ENCODE measurements at regions of chr15 and their contacts with region 1.

Region 1: DNA sequence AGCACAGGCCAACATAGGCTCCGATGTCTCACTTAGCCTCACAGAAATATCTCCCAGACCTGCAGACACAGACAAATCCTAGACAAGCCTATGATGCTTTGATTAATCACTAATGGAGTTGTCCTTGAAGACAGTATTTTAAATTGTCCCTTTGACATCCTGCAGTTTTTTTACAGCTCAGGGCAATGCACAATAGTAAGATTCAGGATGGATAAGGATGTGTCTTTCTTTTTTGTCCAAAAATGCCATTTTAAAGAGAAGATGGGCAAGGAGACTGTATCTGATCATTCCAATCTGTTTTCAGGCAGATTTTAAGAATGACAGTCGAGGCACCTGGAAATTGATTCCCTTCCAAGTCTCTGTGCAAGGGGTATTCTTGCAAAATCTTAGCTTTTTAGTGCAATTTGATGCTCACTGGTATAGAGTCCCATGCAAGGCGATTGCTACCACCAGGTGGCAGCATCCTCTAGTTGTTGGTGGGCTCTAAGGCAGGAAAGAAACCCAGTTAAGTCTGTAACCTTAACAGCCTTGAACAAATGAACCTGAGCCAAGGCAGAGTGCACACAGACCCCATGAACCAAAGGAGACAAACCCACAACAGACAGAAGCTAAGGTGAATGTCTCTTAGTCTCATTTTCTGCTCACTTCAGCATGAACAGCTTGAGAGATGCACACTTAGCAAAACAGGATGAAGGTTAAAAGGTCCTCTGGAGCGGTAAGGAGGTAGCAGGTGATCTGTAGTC is 51.2 kb upstream of the MINAR1 start:
- DNase-seq: peak; percentile 50
- H3K4me3 Mint-ChIP-seq: no peak overlapping the region
- H3K27ac Mint-ChIP-seq: no peak overlapping the region
- H3K4me1 Mint-ChIP-seq: no peaks in the 10 kb centered on the region
- H3K27me3 Mint-ChIP-seq: no peaks in the 10 kb centered on the region

Region 2: DNA sequence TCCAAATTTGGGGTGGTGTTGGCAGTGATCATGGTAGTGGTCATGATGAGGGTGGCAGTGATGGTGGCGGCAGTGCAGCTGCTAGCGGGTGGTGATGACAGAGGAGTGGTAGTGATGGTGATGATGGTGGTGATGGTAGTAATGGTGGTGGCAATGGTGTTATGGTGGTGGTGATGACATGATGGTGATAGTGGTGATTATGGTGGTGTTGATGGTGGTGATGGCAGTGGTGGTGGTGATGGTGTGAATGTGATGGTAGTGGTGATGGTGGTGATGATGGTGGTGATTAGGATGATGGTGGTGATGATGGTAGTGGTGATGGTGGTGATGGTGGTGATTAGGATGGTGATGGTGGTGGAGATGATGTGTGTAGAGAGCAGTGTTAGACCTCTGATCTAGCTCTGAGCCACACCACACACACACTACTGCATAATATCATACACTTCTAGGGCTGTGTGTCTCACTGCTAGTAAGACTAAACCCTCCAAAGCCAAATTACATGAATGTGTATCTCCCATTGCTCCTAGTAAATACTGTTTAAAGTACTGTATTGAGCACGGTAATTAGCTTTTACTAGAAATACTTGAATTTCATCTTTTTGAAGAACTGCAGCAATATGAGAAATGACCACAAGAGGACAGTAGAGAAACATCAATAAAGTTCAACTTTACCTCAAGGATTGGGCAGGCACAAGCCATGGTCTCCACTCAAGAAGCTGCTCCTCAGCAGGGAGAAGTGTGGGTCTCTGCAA is 41.2 kb before region 1 on chr15:
- intact Hi-C with region 1: no loop called
- DNase-seq: no peak
- H3K4me3 Mint-ChIP-seq: no peak overlapping the region
- H3K27ac Mint-ChIP-seq: no peak overlapping the region
- H3K4me1 Mint-ChIP-seq: no peaks in the 10 kb centered on the region
- H3K27me3 Mint-ChIP-seq: no peaks in the 10 kb centered on the region

Region 3: GRCh38 chr15:79596051-79596507 is 215.2 kb after region 1 on chr15:
- intact Hi-C with region 1: loop called (anchors 1 kb)
- DNase-seq: peak; percentile 51
- H3K4me3 Mint-ChIP-seq: no peak overlapping the region
- H3K27ac Mint-ChIP-seq: no peak overlapping the region
- H3K4me1 Mint-ChIP-seq: no peaks in the 10 kb centered on the region
- H3K27me3 Mint-ChIP-seq: peaks cover 9% of the 10 kb centered on the region

Region 4: DNA sequence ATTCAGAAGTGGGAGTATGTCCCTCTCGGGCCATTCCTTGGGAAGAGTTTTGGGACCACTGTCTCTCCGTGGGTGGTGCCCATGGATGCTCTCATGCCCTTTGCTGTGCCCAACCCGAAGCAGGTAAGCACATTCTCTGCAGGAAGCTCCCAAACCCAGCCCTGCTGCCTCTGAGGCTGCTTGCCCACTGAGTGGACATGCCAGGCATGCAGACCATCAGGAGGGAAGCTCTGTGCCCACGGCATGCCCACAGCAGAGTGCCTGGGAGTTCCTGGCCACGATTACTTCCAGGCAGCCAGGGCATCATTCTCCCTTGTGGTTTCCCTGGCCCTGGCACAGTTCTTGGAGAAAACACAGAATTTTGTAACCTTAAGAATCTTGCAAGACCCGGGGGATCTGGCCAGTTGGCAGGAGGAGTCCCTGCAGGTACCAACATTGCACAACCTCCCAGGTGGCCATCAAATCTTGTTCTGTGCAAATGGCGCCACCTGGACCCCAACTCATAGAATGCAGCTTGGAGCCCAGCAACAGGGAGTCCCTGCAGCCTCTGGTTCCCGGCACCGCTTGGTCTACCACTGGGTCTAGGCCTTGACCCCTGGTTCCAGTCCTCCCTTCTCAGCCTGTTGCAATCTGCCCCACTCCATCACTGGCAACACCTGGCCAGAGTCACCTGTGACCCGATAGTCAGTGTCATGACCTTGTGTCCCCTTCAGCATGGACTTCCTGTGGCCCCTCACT is 792.3 kb after region 1 on chr15:
- intact Hi-C with region 1: loop called (anchors 1 kb)
- DNase-seq: peak; percentile 57
- H3K4me3 Mint-ChIP-seq: no peak overlapping the region
- H3K27ac Mint-ChIP-seq: no peak overlapping the region
- H3K4me1 Mint-ChIP-seq: peaks cover 5% of the 10 kb centered on the region
- H3K27me3 Mint-ChIP-seq: no peaks in the 10 kb centered on the region

Region 5: DNA sequence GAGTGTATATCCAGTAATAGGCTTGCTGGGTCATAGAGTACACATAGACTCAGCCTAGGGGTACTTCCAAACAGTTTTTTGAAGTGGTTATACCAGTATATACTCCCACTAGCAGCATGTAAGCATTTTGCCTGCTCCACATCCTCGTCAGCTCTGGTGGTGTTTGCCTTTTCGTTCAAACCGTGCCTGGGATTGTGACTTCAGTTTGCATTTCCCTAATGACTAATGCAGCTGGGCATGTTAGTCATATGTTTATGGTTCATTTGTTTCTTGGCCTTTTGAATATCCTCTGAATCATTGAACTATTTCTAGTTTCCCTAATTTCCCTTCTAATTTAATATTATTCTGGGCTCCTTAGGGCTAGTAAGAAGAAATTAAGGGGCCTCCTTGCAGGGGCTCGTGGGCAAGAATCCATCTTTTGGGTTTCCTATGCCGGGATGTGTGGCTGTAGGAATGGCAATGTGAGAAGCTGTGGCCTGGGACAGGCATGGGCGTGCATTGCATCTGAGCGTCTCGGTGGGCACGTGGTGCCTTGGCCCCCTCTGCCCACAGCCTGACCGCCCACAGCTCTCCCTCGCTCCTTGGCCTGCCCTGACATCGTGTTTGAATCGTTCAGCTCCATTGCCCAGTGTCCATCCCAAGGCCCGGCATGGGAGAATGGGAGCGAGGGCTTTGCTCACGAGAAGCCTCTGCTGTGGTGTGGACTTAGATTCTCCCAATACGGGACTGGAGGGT is 798.3 kb after region 1 on chr15:
- intact Hi-C with region 1: loop called (anchors 2 kb)
- DNase-seq: no peak
- H3K4me3 Mint-ChIP-seq: no peak overlapping the region
- H3K27ac Mint-ChIP-seq: no peak overlapping the region
- H3K4me1 Mint-ChIP-seq: no peaks in the 10 kb centered on the region
- H3K27me3 Mint-ChIP-seq: no peaks in the 10 kb centered on the region

Region 6: DNA sequence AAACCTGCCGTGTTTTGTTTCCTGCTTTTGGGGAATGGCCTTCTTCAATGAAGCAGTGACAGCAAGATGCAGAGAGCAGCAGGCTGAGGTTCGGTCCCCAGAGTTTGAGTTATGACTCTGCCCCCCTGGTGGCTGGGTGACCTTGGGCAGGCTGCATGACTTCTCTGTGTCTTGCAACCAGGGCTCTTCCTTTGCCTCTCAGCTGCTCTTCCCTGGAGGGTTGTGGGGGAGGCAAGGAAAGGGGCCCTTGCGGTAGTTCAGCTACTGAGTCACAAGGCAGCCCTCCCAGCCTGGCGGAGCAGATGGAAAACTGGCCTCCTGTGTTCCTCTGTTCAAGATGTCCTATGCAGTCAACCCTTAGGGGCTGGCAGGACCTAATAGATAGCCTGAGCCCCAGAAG is 854.0 kb after region 1 on chr15:
- intact Hi-C with region 1: loop called (anchors 2 kb)
- DNase-seq: peak; percentile 21
- H3K4me3 Mint-ChIP-seq: no peak overlapping the region
- H3K27ac Mint-ChIP-seq: no peak overlapping the region
- H3K4me1 Mint-ChIP-seq: no peaks in the 10 kb centered on the region
- H3K27me3 Mint-ChIP-seq: peaks cover 9% of the 10 kb centered on the region

Measured in activated T-helper 1 cell treated with anti-CD3 and anti-CD28 coated beads, Interleukin-12 subunit alpha, Interleukin-12 subunit beta, Interleukin-2, Interleukin-4 antibody, amounts not matched to agents 30 ng/mL and 10 ng/mL and 1 ng/mL, durations not matched to agents 14 hours and 24 hours and 36 hours (primary cell).